ENCODE measurements at regions of chr12 and their contacts with region 1.

Region 1: GRCh38 chr12:22544038-22544979 is at the start of gene C2CD5:
- DNase-seq: peak; percentile 80
- ATAC-seq: peak; percentile 85
- H3K4me3 ChIP-seq: peak within 1 kb of the TSS; percentile 69
- H3K27ac ChIP-seq: peak within 1 kb of the TSS; percentile 84
- H3K4me1 ChIP-seq: peaks cover 7% of the 10 kb centered on the region
- H3K27me3 ChIP-seq: no peaks in the 10 kb centered on the region
- CTCF ChIP-seq: peak; percentile 24 to 34 (median 33); a peak in 4 of 6 replicates
- EP300 ChIP-seq: 0 out of 4 replicates have a peak, but pooled peaks of 1 of the 2 experiments have one; percentile 17
- POLR2A ChIP-seq: peak; percentile 94
- RAD21 ChIP-seq: no peak
- polyA plus RNA-seq, gene C2CD5: 7.7 to 10.1 TPM

Region 2: GRCh38 chr12:22409377-22410164 is 134.7 kb before region 1 on chr12:
- CTCF ChIA-PET with region 1: no interaction called
- POLR2A ChIA-PET with region 1: no interaction called
- RAD21 ChIA-PET with region 1: no interaction called
- SMC1A ChIA-PET with region 1: no interaction called
- in situ Hi-C with region 1: no loop called
- intact Hi-C with region 1: loop called (anchors 10 kb)
- DNase-seq: peak; percentile 61
- ATAC-seq: peak; percentile 97
- H3K4me3 ChIP-seq: no peak overlapping the region
- H3K27ac ChIP-seq: no peak overlapping the region
- H3K4me1 ChIP-seq: peaks cover 10% of the 10 kb centered on the region
- H3K27me3 ChIP-seq: no peaks in the 10 kb centered on the region
- CTCF ChIP-seq: no peak
- EP300 ChIP-seq: peak; percentile 93 to 97
- POLR2A ChIP-seq: no peak
- RAD21 ChIP-seq: no peak

Region 3: GRCh38 chr12:22624870-22625761 is 80.8 kb after region 1 on chr12 and contains the start of gene ETNK1:
- CTCF ChIA-PET with region 1: interaction called, 3 read pairs
- POLR2A ChIA-PET with region 1: interaction called, 7 read pairs
- RAD21 ChIA-PET with region 1: interaction called, 4 read pairs
- SMC1A ChIA-PET with region 1: interaction called, 7 read pairs
- in situ Hi-C with region 1: loop called (anchors 5 kb)
- intact Hi-C with region 1: loop called (anchors 2 kb)
- DNase-seq: peak; percentile 27
- ATAC-seq: peak; percentile 94
- H3K4me3 ChIP-seq: peak within 1 kb of the TSS; percentile 78
- H3K27ac ChIP-seq: peak within 1 kb of the TSS; percentile 87
- H3K4me1 ChIP-seq: no peaks in the 10 kb centered on the region
- H3K27me3 ChIP-seq: no peaks in the 10 kb centered on the region
- CTCF ChIP-seq: no peak
- EP300 ChIP-seq: no peak
- POLR2A ChIP-seq: peak; percentile 97
- RAD21 ChIP-seq: no peak
- polyA plus RNA-seq, gene ETNK1: 12.3 to 16.3 TPM

Region 4: DNA sequence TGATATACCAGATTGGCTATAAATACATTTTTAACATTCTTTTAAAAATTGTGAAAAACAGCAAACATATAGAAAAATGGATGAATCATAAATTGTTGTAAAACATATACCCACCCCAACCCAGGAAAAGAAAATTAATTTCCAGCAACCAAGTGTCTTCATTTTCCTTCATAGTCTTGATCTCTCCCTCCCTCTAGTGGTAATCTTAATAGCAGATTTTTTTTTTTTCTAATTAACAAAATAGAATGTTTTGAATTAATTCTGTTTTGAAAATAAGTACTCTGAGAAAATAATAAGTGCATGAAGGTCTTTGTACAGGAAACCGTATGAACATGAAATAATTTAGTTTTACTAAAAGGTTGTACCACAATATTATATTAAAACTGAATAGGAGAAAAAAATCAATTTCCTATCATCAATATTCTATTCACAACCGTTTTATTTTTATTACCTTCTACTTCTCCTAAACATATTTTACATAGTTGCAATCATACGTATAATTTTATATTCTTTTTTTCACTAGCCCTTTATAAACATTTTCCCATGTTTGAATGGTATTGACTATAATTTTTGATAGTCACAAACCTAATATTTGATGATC is 87.7 kb after region 1 on chr12:
- CTCF ChIA-PET with region 1: interaction called, 3 read pairs
- POLR2A ChIA-PET with region 1: interaction called, 4 read pairs
- RAD21 ChIA-PET with region 1: interaction called, 4 read pairs
- SMC1A ChIA-PET with region 1: interaction called, 7 read pairs
- in situ Hi-C with region 1: loop called (anchors 5 kb)
- intact Hi-C with region 1: loop called (anchors 1 kb)
- DNase-seq: no peak
- ATAC-seq: peak; percentile 18; the same call in 2 of the 3 replicates
- H3K4me3 ChIP-seq: no peak overlapping the region
- H3K27ac ChIP-seq: no peak overlapping the region
- H3K4me1 ChIP-seq: no peaks in the 10 kb centered on the region
- H3K27me3 ChIP-seq: no peaks in the 10 kb centered on the region
- CTCF ChIP-seq: peak; percentile 38 to 52 (median 51); a peak in 5 of 6 replicates
- EP300 ChIP-seq: no peak
- POLR2A ChIP-seq: no peak
- RAD21 ChIP-seq: peak; percentile 52

Region 5: GRCh38 chr12:22856178-22856577 is 311.9 kb after region 1 on chr12:
- CTCF ChIA-PET with region 1: no interaction called
- POLR2A ChIA-PET with region 1: no interaction called
- RAD21 ChIA-PET with region 1: no interaction called
- SMC1A ChIA-PET with region 1: no interaction called
- in situ Hi-C with region 1: no loop called
- intact Hi-C with region 1: no loop called
- DNase-seq: no peak
- ATAC-seq: no peak
- H3K4me3 ChIP-seq: no peak overlapping the region
- H3K27ac ChIP-seq: no peak overlapping the region
- H3K4me1 ChIP-seq: no peaks in the 10 kb centered on the region
- H3K27me3 ChIP-seq: no peaks in the 10 kb centered on the region; a peak in 1 of 4 replicates
- CTCF ChIP-seq: peak; percentile 35 to 56 (median 45); a peak in 5 of 6 replicates
- EP300 ChIP-seq: no peak
- POLR2A ChIP-seq: no peak
- RAD21 ChIP-seq: peak; percentile 62

Measured in GM12878 (cell line).